ENCODE measurements at regions of chr7 and their contacts with region 1.

Region 1: GRCh38 chr7:56051339-56052191 is at the starts of genes CCT6A and PSPH:
- DNase-seq: peak; percentile 89
- H3K4me3 Mint-ChIP-seq: peak within 1 kb of the TSS; percentile 97
- H3K27ac Mint-ChIP-seq: peak within 1 kb of the TSS; percentile 95
- H3K4me1 Mint-ChIP-seq: peaks cover 46% of the 10 kb centered on the region
- H3K27me3 Mint-ChIP-seq: no peaks in the 10 kb centered on the region
- total RNA-seq, gene CCT6A: 308 TPM in 2 replicates
- total RNA-seq, gene PSPH: 17.3 and 19.3 TPM in 2 replicates

Region 2: GRCh38 chr7:55365675-55366460 is 685.7 kb before region 1 on chr7:
- intact Hi-C with region 1: loop called (anchors 1 kb)
- DNase-seq: peak; percentile 94
- H3K4me3 Mint-ChIP-seq: peak overlapping the region; percentile 98
- H3K27ac Mint-ChIP-seq: peak overlapping the region; percentile 98
- H3K4me1 Mint-ChIP-seq: peaks cover 19% of the 10 kb centered on the region
- H3K27me3 Mint-ChIP-seq: peaks cover 8% of the 10 kb centered on the region

Region 3: GRCh38 chr7:55641273-55641691 is 410.3 kb before region 1 on chr7:
- intact Hi-C with region 1: loop called (anchors 1 kb)
- DNase-seq: peak; percentile 11
- H3K4me3 Mint-ChIP-seq: no peak overlapping the region
- H3K27ac Mint-ChIP-seq: no peak overlapping the region
- H3K4me1 Mint-ChIP-seq: peaks cover 11% of the 10 kb centered on the region
- H3K27me3 Mint-ChIP-seq: peaks cover 7% of the 10 kb centered on the region

Region 4: DNA sequence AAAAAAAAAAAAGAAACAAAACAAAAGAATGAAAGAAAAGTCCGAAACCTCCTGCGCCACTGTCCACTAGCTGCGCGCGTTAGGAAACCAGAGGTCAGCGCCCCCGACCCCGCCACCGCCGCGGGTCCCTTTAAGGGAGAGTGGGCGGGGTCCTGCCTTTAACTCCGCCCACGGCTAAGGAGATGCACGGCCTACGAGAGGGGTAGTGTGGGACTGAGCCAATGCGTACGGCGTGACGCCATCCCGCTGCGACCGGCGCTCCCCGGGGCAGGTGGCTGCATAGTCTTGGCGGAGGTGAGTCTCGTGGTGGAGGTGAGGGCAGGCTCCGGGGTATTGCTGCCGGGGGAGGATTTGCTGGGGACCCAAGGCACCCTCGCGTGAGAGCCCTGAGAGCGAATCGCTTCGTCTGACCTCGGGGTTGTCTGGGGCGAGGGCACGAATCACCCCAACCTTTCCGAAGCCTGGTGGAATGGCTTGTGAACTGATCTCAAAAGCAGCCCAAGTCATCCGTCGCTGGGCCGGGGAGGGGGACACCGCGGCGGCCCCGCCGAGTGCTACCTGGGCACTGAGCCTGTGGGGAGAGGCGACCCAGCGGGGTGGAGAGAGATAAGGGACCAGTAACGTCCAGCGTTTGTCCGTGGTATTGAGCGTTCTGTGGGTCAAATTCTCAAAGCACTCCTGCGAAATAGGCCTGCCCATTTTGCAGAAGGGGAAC is 99.8 kb before region 1 on chr7 and contains the start of gene MRPS17:
- intact Hi-C with region 1: loop called (anchors 1 kb)
- DNase-seq: peak; percentile 92
- H3K4me3 Mint-ChIP-seq: peak within 1 kb of the TSS; percentile 92
- H3K27ac Mint-ChIP-seq: peak within 1 kb of the TSS; percentile 92
- H3K4me1 Mint-ChIP-seq: peaks cover 10% of the 10 kb centered on the region
- H3K27me3 Mint-ChIP-seq: no peaks in the 10 kb centered on the region
- total RNA-seq, gene MRPS17: 38.2 and 39.3 TPM in 2 replicates

Region 5: DNA sequence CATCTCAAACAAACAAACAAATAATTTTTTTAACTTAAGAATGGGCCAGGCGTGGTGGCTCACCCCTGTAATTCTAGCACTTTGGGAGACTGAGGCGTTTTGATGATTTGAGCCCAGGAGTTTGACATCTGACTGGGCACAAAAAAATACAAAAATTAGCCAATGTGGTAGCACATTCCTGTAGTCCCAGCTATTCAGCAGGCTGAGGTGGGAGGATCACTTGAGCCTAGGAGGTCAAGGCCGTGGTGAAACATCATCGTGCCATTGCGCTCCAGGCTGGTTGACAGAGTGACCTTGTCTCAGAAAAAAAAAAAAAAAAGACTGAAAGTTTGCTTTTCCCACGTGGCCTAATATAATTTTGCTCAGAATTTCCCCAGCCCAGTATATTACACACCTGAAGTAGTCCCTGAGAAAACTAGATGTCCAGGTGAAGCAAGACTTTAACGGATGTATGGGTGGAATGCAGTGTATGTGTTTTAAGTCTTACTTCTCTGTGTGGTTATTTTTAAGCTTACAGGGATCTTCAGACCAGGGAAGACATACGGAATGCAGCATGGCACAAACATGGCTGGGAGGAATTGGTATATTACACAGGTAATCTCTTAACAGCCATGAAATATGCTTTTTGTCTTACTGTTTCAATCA is 54.6 kb before region 1 on chr7:
- intact Hi-C with region 1: loop called (anchors 2 kb)
- DNase-seq: no peak
- H3K4me3 Mint-ChIP-seq: no peak overlapping the region
- H3K27ac Mint-ChIP-seq: no peak overlapping the region
- H3K4me1 Mint-ChIP-seq: peaks cover 16% of the 10 kb centered on the region
- H3K27me3 Mint-ChIP-seq: no peaks in the 10 kb centered on the region

Region 6: DNA sequence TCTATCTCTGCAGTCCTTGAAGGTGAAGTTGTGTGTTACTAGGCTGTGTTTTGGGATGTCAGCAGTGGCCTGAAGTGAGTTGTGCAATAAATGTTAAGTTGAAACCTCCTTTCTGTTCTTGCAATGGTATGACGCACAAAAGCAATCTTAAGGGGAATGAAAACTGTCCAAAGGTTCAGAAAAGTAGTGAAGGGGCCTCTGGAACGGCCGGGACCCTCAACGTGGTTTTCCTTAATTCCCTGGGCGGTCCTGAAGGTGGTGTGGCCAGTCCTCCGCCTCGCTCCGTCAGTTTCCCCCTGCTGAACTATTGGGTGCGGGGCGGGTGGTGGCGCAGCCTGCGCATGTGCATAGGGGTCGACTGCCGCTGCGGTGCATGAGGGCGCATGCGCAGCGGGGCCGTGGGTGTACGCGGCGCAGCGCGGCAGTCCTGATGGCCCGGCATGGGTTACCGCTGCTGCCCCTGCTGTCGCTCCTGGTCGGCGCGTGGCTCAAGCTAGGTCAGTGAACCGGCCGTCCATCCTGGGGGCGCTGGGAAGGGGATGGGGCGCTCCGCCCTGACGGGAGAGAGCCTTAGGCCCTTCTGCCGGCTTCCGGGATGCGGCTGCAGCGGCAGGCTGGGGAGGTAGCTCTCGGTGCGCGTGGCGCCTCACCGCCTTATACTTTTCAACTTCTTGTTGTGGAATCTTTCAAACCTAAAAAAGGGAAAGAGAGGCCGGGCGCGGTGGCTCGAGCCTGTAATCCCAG is 12.5 kb after region 1 on chr7 and contains the start of gene SUMF2:
- intact Hi-C with region 1: loop called (anchors 1 kb)
- DNase-seq: peak; percentile 88
- H3K4me3 Mint-ChIP-seq: peak within 1 kb of the TSS; percentile 94
- H3K27ac Mint-ChIP-seq: peak within 1 kb of the TSS; percentile 87
- H3K4me1 Mint-ChIP-seq: peaks cover 46% of the 10 kb centered on the region
- H3K27me3 Mint-ChIP-seq: no peaks in the 10 kb centered on the region
- total RNA-seq, gene SUMF2: 157 and 166 TPM in 2 replicates

Region 7: DNA sequence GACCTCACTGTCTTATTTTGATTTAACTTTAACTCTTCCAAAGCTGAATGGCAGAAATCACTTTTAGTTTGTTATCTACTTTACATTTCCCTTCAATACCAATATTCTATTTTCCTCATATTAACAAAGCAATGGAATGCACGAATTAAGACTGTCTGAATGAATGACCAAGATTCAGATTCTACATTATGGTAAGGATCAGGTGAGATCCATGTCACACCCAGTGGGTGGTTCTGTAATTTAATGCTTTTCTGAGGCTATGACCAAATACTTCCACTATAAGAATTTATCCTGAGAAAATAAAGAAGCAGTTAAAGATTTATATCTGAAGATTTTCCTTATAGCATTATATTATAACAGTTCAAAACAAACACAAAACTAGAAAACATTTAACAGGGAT is 154.9 kb after region 1 on chr7:
- intact Hi-C with region 1: loop called (anchors 5 kb)
- DNase-seq: no peak
- H3K4me3 Mint-ChIP-seq: no peak overlapping the region
- H3K27ac Mint-ChIP-seq: no peak overlapping the region
- H3K4me1 Mint-ChIP-seq: no peaks in the 10 kb centered on the region
- H3K27me3 Mint-ChIP-seq: no peaks in the 10 kb centered on the region

Region 8: DNA sequence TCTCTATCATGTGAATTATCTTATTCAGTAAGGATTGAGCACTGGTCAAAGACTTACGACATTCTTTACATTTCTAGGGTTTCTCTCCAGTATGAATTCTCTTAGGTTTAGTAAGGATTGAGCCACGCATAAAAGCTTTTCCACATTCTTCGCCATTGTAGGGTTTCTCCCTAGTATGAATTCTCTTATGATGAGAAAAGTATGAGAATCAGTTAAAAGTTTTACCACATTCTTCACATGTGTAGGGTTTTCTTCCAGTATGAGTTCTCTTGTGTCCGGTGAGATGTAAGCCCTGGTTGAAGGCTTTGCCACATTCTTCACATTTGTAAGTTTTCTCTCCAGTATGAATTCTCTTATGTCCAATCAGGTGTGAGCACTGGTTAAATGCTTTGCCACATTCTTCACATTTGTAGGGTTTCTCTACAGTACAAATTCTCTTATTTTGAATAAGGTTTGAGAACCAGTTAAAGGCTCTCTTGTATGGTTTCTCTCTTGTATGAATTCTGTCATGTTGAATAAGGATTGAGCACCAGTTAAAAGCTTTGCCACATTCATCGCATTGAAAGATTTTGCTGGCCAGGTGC is 634.8 kb after region 1 on chr7:
- intact Hi-C with region 1: no loop called
- DNase-seq: no peak
- H3K4me3 Mint-ChIP-seq: no peak overlapping the region
- H3K27ac Mint-ChIP-seq: no peak overlapping the region
- H3K4me1 Mint-ChIP-seq: no peaks in the 10 kb centered on the region
- H3K27me3 Mint-ChIP-seq: no peaks in the 10 kb centered on the region

Measured in activated T-helper 1 cell treated with anti-CD3 and anti-CD28 coated beads, Interleukin-12 subunit alpha, Interleukin-12 subunit beta, Interleukin-2, Interleukin-4 antibody, amounts not matched to agents 30 ng/mL and 10 ng/mL and 1 ng/mL, durations not matched to agents 14 hours and 24 hours and 36 hours (primary cell).